PC-9 (cell line): ENCODE measurements at regions of chr19 and their contacts with region 1.

Region 1: GRCh38 chr19:48333467-48334384 is 8.4 kb downstream of the EMP3 start:
- DNase-seq: peak; percentile 87 to 91
- H3K4me3 ChIP-seq: peak overlapping the region; percentile 55
- H3K27ac ChIP-seq: peak overlapping the region; percentile 68
- H3K4me1 ChIP-seq: peaks cover 16% of the 10 kb centered on the region
- H3K27me3 ChIP-seq: no peaks in the 10 kb centered on the region
- CTCF ChIP-seq: peak; percentile 87

Region 2: DNA sequence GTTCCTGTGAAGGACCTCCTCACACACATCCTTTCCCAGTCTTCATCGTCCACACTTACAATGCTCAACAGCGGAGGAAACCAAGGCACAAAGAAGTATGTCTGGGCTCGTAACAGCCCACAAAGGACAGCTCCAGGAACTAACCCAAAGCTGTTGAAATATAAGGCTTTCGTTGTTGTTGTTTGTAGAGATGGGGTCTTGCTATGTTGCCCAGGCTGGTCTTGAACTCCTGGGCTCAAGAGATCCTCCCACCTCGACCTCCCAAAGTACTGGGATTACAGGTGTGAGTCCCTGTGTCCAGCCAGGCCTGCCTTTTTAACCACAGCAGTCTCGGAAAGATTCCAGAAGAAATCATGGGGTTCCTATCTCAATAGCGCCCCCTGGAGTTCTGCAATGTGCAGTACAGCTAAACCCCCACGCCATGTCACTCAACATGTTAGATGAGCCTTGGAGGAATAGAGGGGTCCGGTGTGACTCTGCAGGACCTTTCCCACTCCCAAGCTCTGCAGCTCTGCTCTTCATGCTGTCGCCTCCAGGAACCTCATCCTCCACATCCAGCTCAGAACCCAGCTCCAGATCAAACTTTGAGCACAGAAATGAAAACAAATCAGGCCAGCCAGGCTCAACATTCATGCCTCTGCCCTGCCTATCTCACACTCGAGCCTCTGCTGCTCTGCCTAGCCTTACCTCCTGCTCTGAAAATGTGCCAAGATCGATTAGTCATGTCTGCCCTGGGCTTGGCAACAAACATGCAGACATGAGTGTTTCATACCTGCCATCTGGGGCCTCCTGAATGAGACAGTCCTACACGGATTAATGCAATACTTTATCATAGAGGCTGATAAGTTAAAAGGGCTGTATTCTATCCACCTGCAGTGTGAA is 230.6 kb before region 1 on chr19:
- CTCF ChIA-PET with region 1: interaction called, 12 read pairs
- POLR2A ChIA-PET with region 1: no interaction called
- intact Hi-C with region 1: no loop called
- DNase-seq: peak; percentile 31 to 61
- H3K4me3 ChIP-seq: no peak overlapping the region
- H3K27ac ChIP-seq: no peak overlapping the region
- H3K4me1 ChIP-seq: no peaks in the 10 kb centered on the region
- H3K27me3 ChIP-seq: no peaks in the 10 kb centered on the region; the same call in 1 of the 2 replicates
- CTCF ChIP-seq: peak; percentile 93

Region 3: GRCh38 chr19:48170038-48170812 is 163.5 kb before region 1 on chr19 and contains the starts of genes LIG1 and ZSWIM9:
- CTCF ChIA-PET with region 1: interaction called, 10 read pairs
- POLR2A ChIA-PET with region 1: interaction called, 3 read pairs
- intact Hi-C with region 1: no loop called
- DNase-seq: peak; percentile 93 to 94
- H3K4me3 ChIP-seq: peak within 1 kb of the TSS; percentile 96
- H3K27ac ChIP-seq: peak within 1 kb of the TSS; percentile 57
- H3K4me1 ChIP-seq: peaks cover 17% of the 10 kb centered on the region
- H3K27me3 ChIP-seq: no peaks in the 10 kb centered on the region
- CTCF ChIP-seq: peak; percentile 52; the same call in 1 of the 2 replicates
- total RNA-seq, gene LIG1: 109 and 116 TPM in 2 replicates
- total RNA-seq, gene ZSWIM9: 8.3 and 12.0 TPM in 2 replicates

Region 4: DNA sequence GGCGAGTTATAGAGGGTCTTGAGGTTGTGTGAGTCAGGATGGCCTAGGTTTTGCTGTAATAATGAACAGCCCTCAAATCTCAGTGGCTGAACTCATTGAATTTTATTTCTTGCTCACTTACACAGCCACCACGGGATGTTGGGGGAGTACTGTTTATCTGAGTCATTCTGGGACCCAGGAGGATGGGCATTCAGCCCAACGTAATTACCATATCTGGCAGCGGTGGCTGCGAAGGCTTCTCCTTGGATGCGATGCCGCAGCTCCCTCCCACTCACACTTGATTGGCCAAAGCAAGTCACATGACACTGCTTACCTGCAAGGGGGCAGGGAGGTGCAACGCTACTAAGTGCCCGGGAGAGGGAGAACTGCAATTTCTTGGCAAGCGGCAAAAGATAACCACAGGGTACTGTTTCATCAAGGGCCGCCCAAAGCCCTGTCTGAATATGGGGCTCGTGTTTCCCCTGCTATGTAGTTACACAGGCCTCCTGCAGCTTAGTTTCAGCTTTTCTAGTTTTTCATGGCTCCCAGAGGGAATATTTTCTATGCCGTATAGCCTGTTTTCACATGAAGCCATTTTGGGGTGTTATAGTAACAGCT is 143.3 kb before region 1 on chr19:
- CTCF ChIA-PET with region 1: no interaction called
- POLR2A ChIA-PET with region 1: no interaction called
- intact Hi-C with region 1: no loop called
- DNase-seq: no peak
- H3K4me3 ChIP-seq: no peak overlapping the region
- H3K27ac ChIP-seq: no peak overlapping the region
- H3K4me1 ChIP-seq: no peaks in the 10 kb centered on the region
- H3K27me3 ChIP-seq: no peaks in the 10 kb centered on the region
- CTCF ChIP-seq: 0 out of 2 replicates have a peak, but pooled peaks have one; percentile 17

Region 5: GRCh38 chr19:48203732-48204628 is 129.7 kb before region 1 on chr19:
- CTCF ChIA-PET with region 1: interaction called, 18 read pairs
- POLR2A ChIA-PET with region 1: no interaction called
- intact Hi-C with region 1: no loop called
- DNase-seq: peak; percentile 94 to 95
- H3K4me3 ChIP-seq: peak overlapping the region; percentile 67
- H3K27ac ChIP-seq: no peak overlapping the region; the same call in 1 of the 2 replicates
- H3K4me1 ChIP-seq: peaks cover 14% of the 10 kb centered on the region
- H3K27me3 ChIP-seq: no peaks in the 10 kb centered on the region
- CTCF ChIP-seq: no peak

Region 6: DNA sequence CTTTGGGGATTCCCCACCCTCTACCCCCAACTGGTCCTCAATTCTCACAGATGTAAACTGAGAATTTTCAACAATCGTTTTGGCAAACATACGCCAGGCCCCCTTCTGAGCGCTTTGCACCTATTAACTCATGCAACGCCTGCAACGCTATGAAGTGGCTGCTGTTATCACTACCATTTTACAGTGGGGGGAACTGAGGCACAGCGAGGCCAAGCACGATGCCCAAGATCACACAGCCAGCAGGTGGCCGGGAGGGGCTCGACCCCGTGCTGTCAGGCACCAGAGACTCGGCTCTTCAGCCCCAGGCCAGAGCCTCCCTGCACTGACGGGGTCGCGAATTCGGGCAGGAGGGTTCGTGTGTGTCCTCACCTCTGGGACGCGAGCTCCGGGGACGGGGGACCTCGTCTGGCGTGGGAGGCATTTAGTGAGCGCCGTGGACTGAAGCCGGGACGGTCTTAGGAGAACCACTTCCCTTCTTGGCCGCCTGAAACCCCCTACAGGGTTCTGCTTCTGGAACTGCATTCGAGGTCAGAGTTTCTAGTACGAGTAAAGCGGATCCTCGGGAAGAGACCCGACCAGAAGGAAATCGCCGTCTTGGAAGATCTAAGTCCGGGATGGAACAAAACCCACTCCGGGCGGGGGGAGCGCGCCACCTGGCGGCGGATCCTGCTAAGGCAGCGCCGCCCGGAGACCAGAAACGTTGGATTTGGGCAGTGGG is 42.8 kb before region 1 on chr19:
- CTCF ChIA-PET with region 1: interaction called, 5 read pairs
- POLR2A ChIA-PET with region 1: interaction called, 3 read pairs
- intact Hi-C with region 1: loop called (anchors 5 kb)
- DNase-seq: peak; percentile 65 to 82
- H3K4me3 ChIP-seq: peak overlapping the region; percentile 70
- H3K27ac ChIP-seq: no peak overlapping the region
- H3K4me1 ChIP-seq: peaks cover 13% of the 10 kb centered on the region
- H3K27me3 ChIP-seq: no peaks in the 10 kb centered on the region
- CTCF ChIP-seq: peak; percentile 99

Region 7: DNA sequence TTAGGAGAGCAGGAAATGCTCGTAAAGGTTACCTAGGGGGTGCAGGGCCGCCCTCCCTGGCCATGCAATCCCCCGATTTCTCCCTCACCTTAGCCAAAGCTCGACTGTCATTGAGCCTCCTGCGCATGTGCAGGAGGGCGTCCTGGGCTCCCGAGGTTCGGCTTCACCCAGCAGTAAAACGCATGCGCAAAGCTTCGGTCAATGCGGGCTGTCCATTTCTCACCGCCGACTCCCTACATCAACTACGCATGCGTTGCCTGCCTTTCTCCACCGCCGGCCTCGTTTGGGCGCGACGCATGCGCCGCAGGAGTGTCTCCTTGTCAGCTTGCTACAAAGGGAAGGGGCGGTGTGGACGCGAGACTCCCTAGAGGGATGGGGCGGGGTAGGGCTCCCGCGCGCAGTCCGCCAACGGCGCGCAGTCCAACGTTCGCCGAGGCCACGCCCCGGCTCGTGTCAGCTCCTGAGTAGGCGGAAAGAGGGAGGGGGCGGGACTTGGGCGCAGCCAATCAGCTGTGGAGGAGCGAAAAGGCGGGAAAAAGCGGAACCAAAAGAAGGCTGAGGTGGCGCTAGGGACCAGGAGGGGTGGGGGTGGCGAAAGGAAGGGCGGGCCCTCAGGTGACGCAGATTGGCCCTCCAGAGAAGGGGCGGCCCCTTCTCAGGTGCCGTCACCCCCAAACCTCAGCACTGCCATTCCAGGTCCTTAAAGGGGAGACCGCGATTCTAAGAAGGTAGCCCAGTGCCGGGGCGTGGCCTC is 30.3 kb after region 1 on chr19 and contains the starts of genes SYNGR4 and TMEM143:
- CTCF ChIA-PET with region 1: interaction called, 14 read pairs
- POLR2A ChIA-PET with region 1: interaction called, 24 read pairs
- intact Hi-C with region 1: no loop called
- DNase-seq: peak; percentile 99 to 100
- H3K4me3 ChIP-seq: peak within 1 kb of the TSS; percentile 72
- H3K27ac ChIP-seq: peak within 1 kb of the TSS; percentile 63
- H3K4me1 ChIP-seq: peaks cover 7% of the 10 kb centered on the region
- H3K27me3 ChIP-seq: no peaks in the 10 kb centered on the region
- CTCF ChIP-seq: no peak
- total RNA-seq, gene SYNGR4: 1.3 and 2.1 TPM in 2 replicates
- total RNA-seq, gene TMEM143: 24.8 and 31.3 TPM in 2 replicates

Region 8: GRCh38 chr19:48391107-48391986 is 57.6 kb after region 1 on chr19 and contains the start of gene KDELR1:
- CTCF ChIA-PET with region 1: interaction called, 30 read pairs
- POLR2A ChIA-PET with region 1: no interaction called
- intact Hi-C with region 1: no loop called
- DNase-seq: peak in 1 of 2 experiments; percentile 82
- H3K4me3 ChIP-seq: peak within 1 kb of the TSS; percentile 91
- H3K27ac ChIP-seq: peak within 1 kb of the TSS; percentile 58
- H3K4me1 ChIP-seq: no peaks in the 10 kb centered on the region
- H3K27me3 ChIP-seq: peaks cover 11% of the 10 kb centered on the region
- CTCF ChIP-seq: peak; percentile 95
- total RNA-seq, gene KDELR1: 220 and 261 TPM in 2 replicates

Region 9: DNA sequence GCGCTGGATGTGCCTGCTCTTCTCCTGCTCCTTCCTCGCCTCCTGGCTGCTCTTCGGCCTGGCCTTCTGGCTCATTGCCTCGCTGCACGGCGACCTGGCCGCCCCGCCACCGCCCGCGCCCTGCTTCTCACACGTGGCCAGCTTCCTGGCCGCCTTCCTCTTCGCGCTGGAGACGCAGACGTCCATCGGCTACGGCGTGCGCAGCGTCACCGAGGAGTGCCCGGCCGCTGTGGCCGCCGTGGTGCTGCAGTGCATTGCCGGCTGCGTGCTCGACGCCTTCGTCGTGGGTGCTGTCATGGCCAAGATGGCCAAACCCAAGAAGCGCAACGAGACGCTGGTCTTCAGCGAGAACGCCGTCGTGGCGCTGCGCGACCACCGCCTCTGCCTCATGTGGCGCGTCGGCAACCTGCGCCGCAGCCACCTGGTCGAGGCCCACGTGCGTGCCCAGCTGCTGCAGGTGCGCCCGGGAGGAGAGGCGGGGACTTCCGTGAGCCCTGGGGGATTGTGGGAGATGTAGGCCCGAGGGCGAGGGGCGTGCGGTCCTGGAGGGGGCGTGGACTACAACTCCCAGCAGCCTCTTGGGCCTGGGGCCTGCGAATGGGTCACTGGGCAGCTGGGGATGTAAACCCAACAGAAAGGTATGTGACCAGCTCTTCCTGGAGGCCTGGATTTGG is 128.4 kb after region 1 on chr19:
- CTCF ChIA-PET with region 1: no interaction called
- POLR2A ChIA-PET with region 1: no interaction called
- intact Hi-C with region 1: no loop called
- DNase-seq: no peak
- H3K4me3 ChIP-seq: no peak overlapping the region
- H3K27ac ChIP-seq: no peak overlapping the region
- H3K4me1 ChIP-seq: no peaks in the 10 kb centered on the region
- H3K27me3 ChIP-seq: no peaks in the 10 kb centered on the region
- CTCF ChIP-seq: no peak